OCI-LY7 (cell line): ENCODE measurements at regions of chr14 and their contacts with region 1.

Region 1: GRCh38 chr14:75293920-75294642 is 15.5 kb downstream of the FOS start:
- DNase-seq: peak; percentile 92
- H3K4me3 ChIP-seq: peak overlapping the region; percentile 74
- H3K27ac ChIP-seq: no peak overlapping the region
- H3K4me1 ChIP-seq: peaks cover 21% of the 10 kb centered on the region
- CTCF ChIP-seq: no peak

Region 2: GRCh38 chr14:75126679-75127473 is 167.2 kb before region 1 on chr14 and contains the start of gene NEK9:
- CTCF ChIA-PET with region 1: interaction called, 3 read pairs
- POLR2A ChIA-PET with region 1: interaction called, 3 read pairs
- intact Hi-C with region 1: loop called (anchors 1 kb)
- DNase-seq: peak; percentile 92
- H3K4me3 ChIP-seq: peak within 1 kb of the TSS; percentile 78
- H3K27ac ChIP-seq: peak within 1 kb of the TSS; percentile 69
- H3K4me1 ChIP-seq: peaks cover 28% of the 10 kb centered on the region
- CTCF ChIP-seq: 0 out of 2 replicates have a peak, but pooled peaks have one; percentile 24
- total RNA-seq, gene NEK9: 58.3 and 65.8 TPM in 2 replicates

Region 3: DNA sequence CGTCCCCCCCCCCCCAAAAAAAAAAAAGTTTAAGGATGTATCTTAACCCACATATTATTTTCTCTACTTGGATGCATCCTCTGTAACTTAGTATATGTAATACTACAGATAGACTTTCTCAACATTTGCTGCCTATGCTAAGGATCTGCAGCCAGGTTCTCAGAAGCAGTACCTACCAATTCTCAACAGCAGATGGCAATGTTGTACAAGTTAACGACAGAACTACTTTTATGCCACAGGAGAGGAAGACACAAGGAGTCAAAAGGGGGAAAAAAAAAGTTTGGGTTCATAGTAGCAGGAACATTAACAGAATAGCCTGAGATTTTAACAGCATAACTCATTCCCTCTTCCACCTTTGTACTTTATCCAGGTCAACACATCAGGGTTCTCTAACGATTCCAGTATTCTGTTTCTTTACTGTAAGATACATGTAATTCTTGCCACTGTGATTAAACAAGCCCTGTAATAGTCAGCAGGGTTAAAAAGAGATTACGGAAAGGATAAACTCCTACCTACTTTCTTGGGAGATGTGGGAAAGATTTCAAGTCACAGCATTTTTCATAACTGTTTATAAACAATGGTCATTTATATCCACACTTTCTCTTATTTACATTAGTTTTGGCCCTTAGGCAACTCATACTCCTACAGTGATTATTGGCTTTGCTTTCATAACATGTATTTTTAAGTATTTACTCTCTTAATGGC is 161.5 kb before region 1 on chr14:
- CTCF ChIA-PET with region 1: interaction called, 3 read pairs
- POLR2A ChIA-PET with region 1: interaction called, 4 read pairs
- intact Hi-C with region 1: loop called (anchors 1 kb)
- DNase-seq: peak; percentile 82
- H3K4me3 ChIP-seq: no peak overlapping the region
- H3K27ac ChIP-seq: no peak overlapping the region
- H3K4me1 ChIP-seq: peaks cover 15% of the 10 kb centered on the region
- CTCF ChIP-seq: peak; percentile 96

Region 4: GRCh38 chr14:75176142-75176820 is 117.8 kb before region 1 on chr14 and contains the start of gene TMED10:
- CTCF ChIA-PET with region 1: interaction called, 3 read pairs
- POLR2A ChIA-PET with region 1: interaction called, 6 read pairs
- intact Hi-C with region 1: loop called (anchors 2 kb)
- DNase-seq: peak; percentile 95
- H3K4me3 ChIP-seq: peak within 1 kb of the TSS; percentile 77
- H3K27ac ChIP-seq: peak within 1 kb of the TSS; percentile 88
- H3K4me1 ChIP-seq: peaks cover 35% of the 10 kb centered on the region
- CTCF ChIP-seq: no peak
- total RNA-seq, gene TMED10: 63.1 and 129 TPM in 2 replicates

Region 5: DNA sequence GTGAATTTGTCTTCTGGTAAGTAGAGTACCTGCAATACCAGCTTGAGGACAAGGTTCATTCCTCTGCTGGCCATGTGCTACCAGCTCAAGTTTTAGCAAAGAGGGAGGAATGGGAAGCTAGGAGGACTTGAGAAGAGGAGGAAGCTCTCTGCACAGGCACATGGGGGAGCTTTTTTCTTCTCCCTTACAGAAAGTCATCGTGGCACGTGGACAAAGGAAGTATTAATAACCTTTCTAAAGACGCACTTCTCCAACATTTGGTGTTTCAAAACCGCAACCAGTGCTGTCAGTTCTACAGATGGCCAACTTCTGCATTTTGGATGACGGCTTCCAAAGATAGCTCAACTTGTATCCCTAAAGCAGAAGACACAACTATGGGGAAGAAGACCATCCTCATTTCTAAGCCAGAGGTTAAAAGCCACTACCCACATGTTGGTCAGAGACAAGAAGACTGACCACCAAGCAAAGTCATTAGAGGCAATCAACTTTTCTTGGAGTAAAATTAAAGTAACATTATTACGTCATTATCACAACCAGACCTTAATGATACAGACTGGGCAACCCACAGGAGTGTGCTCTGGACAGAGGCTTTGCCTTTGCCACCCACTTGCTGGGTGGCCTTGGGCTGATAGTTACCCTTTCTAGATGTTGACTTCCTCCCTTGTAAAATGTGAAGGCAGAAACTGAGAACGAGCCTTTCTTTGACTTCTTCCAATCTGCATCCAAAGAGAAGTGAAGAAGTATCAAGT is 105.4 kb before region 1 on chr14:
- CTCF ChIA-PET with region 1: interaction called, 15 read pairs
- POLR2A ChIA-PET with region 1: interaction called, 4 read pairs
- intact Hi-C with region 1: loop called (anchors 1 kb)
- DNase-seq: peak; percentile 92
- H3K4me3 ChIP-seq: peak overlapping the region; percentile 33
- H3K27ac ChIP-seq: peak overlapping the region; percentile 65
- H3K4me1 ChIP-seq: peaks cover 34% of the 10 kb centered on the region
- CTCF ChIP-seq: peak; percentile 53

Region 6: DNA sequence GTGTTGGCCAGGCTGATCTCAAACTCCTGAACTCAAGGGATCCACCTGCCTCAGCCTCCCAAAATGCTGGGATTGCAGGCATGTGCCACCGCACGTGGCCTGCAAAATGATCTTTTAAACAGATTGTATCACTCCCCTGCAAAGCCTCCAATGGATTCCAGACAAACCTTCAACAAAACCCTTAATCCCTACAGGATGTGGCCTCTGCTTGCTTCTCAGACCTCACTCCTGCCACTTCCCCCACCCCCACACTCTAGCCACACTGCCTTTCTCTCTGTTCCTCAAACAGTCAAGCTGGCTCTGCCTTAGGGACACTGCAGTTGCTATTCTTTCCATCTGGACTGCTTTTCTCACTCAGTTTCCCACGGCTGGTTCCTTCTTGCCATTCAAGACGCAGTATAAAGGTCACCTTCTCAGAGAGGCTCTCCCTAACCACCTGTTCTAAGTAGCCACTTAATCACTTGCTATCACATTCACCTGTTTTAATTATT is 70.4 kb before region 1 on chr14:
- CTCF ChIA-PET with region 1: no interaction called
- POLR2A ChIA-PET with region 1: no interaction called
- intact Hi-C with region 1: loop called (anchors 2 kb)
- DNase-seq: peak; percentile 79
- H3K4me3 ChIP-seq: peak overlapping the region; percentile 21
- H3K27ac ChIP-seq: peak overlapping the region; percentile 51
- H3K4me1 ChIP-seq: peaks cover 49% of the 10 kb centered on the region
- CTCF ChIP-seq: no peak

Region 7: GRCh38 chr14:75230140-75231045 is 63.7 kb before region 1 on chr14:
- CTCF ChIA-PET with region 1: no interaction called
- POLR2A ChIA-PET with region 1: interaction called, 3 read pairs
- intact Hi-C with region 1: loop called (anchors 2 kb)
- DNase-seq: peak; percentile 72
- H3K4me3 ChIP-seq: peak overlapping the region; percentile 5
- H3K27ac ChIP-seq: peak overlapping the region; percentile 58
- H3K4me1 ChIP-seq: peaks cover 51% of the 10 kb centered on the region
- CTCF ChIP-seq: peak; percentile 66; the same call in 1 of the 2 replicates

Region 8: DNA sequence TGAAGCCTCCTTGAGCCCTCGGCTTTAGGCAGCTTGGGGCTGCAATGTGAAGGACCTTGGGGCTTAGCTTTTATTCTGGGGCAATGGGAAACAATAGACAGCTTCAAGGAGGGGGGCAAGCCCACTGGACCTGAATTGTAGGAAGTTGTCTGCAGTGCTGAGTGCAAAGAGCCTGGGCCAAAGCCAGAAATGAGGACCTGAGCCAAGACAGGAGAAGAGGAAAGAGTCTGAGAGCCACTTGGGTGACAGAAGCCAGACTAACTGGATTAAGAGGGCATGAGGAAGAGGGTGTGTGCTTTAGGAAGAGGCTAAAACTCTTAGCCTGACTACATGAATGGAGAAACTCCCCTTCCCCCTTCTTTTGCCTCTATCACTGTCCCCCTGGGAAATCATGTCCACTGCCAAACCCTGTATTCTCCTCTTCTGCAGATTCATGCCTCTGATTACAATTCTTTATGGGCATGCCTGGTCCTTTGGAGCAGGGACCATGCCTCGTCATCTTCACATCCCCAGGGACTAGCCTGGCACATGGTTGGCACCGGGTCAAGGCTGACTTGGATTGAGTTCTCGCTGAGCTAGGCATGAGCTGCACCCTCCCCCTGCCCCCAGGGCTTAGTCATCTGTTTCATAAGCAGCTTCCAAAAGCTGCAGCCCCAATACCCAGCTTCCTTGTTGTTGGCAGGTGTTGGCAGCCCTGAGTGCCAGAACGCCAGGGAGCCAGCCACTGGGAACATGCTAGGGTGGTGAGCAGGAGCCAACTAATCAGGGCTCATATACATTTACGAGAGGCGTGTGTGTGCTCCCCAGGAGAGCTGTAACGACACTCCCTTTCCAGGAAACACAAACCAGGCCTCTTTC is 106.0 kb after region 1 on chr14:
- CTCF ChIA-PET with region 1: no interaction called
- POLR2A ChIA-PET with region 1: no interaction called
- intact Hi-C with region 1: no loop called
- DNase-seq: no peak
- H3K4me3 ChIP-seq: no peak overlapping the region
- H3K27ac ChIP-seq: no peak overlapping the region
- H3K4me1 ChIP-seq: no peaks in the 10 kb centered on the region
- CTCF ChIP-seq: no peak

Region 9: DNA sequence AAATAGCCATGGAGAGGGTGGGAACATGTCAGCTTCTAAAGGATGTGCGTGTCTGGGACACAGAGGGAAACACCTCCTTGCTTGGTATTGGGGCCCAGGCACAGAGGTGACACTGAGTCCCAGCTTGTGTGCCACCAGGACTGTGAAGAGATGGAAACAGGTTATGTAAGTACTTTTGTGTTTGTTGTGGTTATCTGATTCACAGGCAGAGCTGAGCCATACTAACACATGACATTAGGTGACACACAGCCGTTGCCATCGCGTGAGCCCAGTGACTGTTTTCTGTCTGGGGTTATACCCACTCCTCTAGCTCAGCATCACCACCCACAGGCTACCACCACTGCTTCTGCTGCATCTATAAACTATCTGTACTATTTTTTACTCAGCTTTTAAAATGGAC is 272.2 kb after region 1 on chr14:
- CTCF ChIA-PET with region 1: no interaction called
- POLR2A ChIA-PET with region 1: no interaction called
- intact Hi-C with region 1: no loop called
- DNase-seq: no peak
- H3K4me3 ChIP-seq: no peak overlapping the region
- H3K27ac ChIP-seq: no peak overlapping the region
- H3K4me1 ChIP-seq: no peaks in the 10 kb centered on the region
- CTCF ChIP-seq: no peak